ENCODE measurements at regions of chr5 and their contacts with region 1.

Region 1: DNA sequence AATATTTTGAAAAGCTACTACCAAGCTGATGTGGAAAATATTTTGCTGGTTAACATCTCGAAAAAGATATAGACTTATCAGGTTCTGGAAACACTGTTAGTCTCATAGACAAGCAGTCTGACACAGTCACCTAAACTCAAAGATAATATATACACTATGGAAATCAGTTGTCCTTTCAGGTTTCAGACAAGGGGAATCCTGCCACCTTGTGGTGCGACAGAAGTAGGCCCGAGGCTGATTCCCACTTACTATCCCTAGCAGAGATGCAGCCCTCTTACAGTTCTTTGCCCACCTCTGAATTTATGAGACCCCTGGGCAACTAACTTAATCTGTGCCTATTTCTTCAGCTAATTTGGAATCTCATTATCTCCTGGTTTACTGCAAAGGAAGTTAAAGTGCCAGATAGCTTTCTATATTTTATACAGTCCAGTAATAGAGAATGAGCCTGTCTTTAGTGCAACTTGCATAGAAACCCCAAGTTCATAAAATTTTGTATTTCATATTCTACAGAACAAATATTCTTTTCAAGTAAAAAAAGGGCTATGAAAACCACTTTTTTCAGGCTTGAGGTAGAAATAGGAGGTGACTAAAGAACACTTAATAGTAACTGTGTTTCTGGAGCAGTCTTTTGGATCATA is 16.9 kb downstream of the RAD1 start:
- DNase-seq: peak; percentile 58 to 86 (median 74)
- H3K4me3 ChIP-seq: no peak overlapping the region
- H3K27ac ChIP-seq: no peak overlapping the region
- H3K4me1 ChIP-seq: peaks cover 0 to 5% of the 10 kb centered on the region in 2 donors
- H3K27me3 ChIP-seq: no peaks in the 10 kb centered on the region
- CTCF ChIP-seq: peak; percentile 75 to 94 (median 85)
- POLR2A ChIP-seq: no peak

Region 2: GRCh38 chr5:34486160-34486848 is 412.1 kb before region 1 on chr5:
- intact Hi-C with region 1: loop called (anchors 10 kb)
- DNase-seq: peak; percentile 67 to 93 (median 86)
- H3K4me3 ChIP-seq: no peak overlapping the region
- H3K27ac ChIP-seq: peak overlapping the region in 1 of 5 donors; percentile 20
- H3K4me1 ChIP-seq: peaks cover 0 to 4% of the 10 kb centered on the region in 2 donors
- H3K27me3 ChIP-seq: no peaks in the 10 kb centered on the region
- CTCF ChIP-seq: peak; percentile 72 to 86 (median 82)
- POLR2A ChIP-seq: no peak

Region 3: DNA sequence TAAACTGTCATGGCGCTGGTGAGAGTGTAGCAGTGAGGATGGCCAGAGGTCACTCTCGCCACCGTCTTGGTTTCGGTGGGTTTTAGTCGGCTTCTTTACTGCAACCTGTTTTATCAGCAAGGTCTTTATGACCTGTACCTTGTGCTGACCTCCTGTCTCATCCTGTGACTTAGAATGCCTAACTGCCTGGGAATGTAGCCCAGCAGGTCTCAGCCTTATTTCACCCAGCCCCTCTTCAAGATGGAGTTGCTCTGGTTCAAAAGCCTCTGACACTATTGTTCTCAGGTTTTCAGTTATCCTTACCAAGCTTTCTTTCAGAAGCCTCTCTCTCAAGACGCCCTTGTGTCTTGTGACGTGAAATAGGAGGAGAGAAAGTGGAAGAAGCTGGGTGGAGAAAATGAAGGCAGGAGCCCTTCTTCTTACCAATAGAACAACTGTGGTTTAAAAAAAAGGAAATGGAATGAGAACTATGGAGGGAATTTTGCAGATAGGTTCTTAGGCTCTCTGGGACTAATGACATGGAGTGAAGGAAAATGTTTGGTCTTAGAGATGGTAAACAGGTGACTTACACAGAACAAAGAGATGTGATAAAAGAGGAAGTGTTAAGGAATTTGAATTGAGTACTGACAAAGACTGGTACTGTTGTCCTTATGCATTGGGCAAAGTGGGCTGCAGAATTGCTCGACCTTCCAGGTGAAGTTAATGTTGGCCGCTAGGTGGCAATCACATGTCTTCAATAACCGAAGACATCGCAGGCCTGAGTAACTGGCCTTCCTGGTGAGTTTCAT is 375.6 kb before region 1 on chr5:
- intact Hi-C with region 1: loop called (anchors 2 to 5 kb)
- DNase-seq: peak; percentile 73 to 90 (median 84)
- H3K4me3 ChIP-seq: no peak overlapping the region
- H3K27ac ChIP-seq: no peak overlapping the region
- H3K4me1 ChIP-seq: no peaks in the 10 kb centered on the region
- H3K27me3 ChIP-seq: no peaks in the 10 kb centered on the region
- CTCF ChIP-seq: peak; percentile 62 to 85 (median 80)
- POLR2A ChIP-seq: no peak

Region 4: GRCh38 chr5:34529536-34530306 is 368.7 kb before region 1 on chr5:
- intact Hi-C with region 1: loop called in 1 of 2 experiments (anchors 5 kb)
- DNase-seq: peak in 2 of 7 donors; percentile 8 to 26
- H3K4me3 ChIP-seq: no peak overlapping the region
- H3K27ac ChIP-seq: no peak overlapping the region
- H3K4me1 ChIP-seq: no peaks in the 10 kb centered on the region
- H3K27me3 ChIP-seq: no peaks in the 10 kb centered on the region
- CTCF ChIP-seq: no peak
- POLR2A ChIP-seq: no peak

Region 5: DNA sequence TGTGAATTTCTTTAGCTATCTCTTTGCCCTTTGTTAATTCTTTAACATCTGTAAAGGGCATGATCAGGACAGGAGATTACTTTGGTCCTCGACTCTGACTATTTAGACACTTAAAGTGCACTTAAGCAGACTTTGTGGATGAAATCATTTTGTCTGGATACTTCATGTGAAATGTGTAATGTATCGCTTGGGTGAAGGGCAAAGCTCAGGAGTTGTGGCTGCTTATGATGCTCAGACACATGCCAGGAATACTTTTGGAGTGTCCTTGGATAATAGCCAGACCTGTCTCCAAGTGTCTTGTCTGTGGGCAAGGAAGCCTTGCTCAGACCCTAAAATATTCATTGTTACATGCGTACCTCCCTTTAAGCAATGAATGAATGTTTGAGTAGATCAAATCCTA is 154.5 kb before region 1 on chr5:
- intact Hi-C with region 1: no loop called
- DNase-seq: peak in 1 of 7 donors; percentile 40
- H3K4me3 ChIP-seq: no peak overlapping the region
- H3K27ac ChIP-seq: no peak overlapping the region
- H3K4me1 ChIP-seq: no peaks in the 10 kb centered on the region
- H3K27me3 ChIP-seq: no peaks in the 10 kb centered on the region
- CTCF ChIP-seq: no peak
- POLR2A ChIP-seq: no peak

Measured in adrenal gland (tissue), 19 donors.